Sigmoid colon (tissue), 7 donors: ENCODE measurements at regions of chr4 and their contacts with region 1.

Region 1: GRCh38 chr4:38730830-38731646 is 51.8 kb downstream of the TLR10 start:
- DNase-seq: peak; percentile 87
- H3K4me3 ChIP-seq: no peak overlapping the region
- H3K27ac ChIP-seq: no peak overlapping the region
- H3K4me1 ChIP-seq: peaks cover 0 to 9% (median 7%) of the 10 kb centered on the region in 4 donors
- H3K27me3 ChIP-seq: no peaks in the 10 kb centered on the region
- CTCF ChIP-seq: peak; percentile 91 to 98 (median 97)
- EP300 ChIP-seq: peak in 1 of 4 donors; percentile 4
- POLR2A ChIP-seq: no peak

Region 2: GRCh38 chr4:38154681-38155608 is 576.1 kb before region 1 on chr4:
- intact Hi-C with region 1: no loop called
- DNase-seq: no peak
- H3K4me3 ChIP-seq: no peak overlapping the region
- H3K27ac ChIP-seq: peak overlapping the region; percentile 26 to 64 (median 42)
- H3K4me1 ChIP-seq: peaks cover 0 to 35% (median 9%) of the 10 kb centered on the region in 4 donors
- H3K27me3 ChIP-seq: no peaks in the 10 kb centered on the region
- CTCF ChIP-seq: no peak
- EP300 ChIP-seq: no peak
- POLR2A ChIP-seq: no peak

Region 3: GRCh38 chr4:38179690-38180377 is 551.2 kb before region 1 on chr4:
- intact Hi-C with region 1: loop called (anchors 1 kb)
- DNase-seq: peak; percentile 87
- H3K4me3 ChIP-seq: no peak overlapping the region
- H3K27ac ChIP-seq: peak overlapping the region in 2 of 4 donors; percentile 6 to 43
- H3K4me1 ChIP-seq: peaks cover 0 to 19% (median 8%) of the 10 kb centered on the region in 4 donors
- H3K27me3 ChIP-seq: no peaks in the 10 kb centered on the region
- CTCF ChIP-seq: peak; percentile 67 to 91 (median 86)
- EP300 ChIP-seq: no peak
- POLR2A ChIP-seq: no peak